ENCODE measurements at regions of chr2 and their contacts with region 1.

Region 1: GRCh38 chr2:60596411-60596810 is 43.0 kb upstream of the BCL11A start:
- DNase-seq: no peak
- H3K4me3 Mint-ChIP-seq: no peak overlapping the region
- H3K27ac Mint-ChIP-seq: no peak overlapping the region
- H3K4me1 Mint-ChIP-seq: peaks cover 8% of the 10 kb centered on the region
- H3K27me3 Mint-ChIP-seq: no peaks in the 10 kb centered on the region
- CTCF ChIP-seq: no peak

Region 2: DNA sequence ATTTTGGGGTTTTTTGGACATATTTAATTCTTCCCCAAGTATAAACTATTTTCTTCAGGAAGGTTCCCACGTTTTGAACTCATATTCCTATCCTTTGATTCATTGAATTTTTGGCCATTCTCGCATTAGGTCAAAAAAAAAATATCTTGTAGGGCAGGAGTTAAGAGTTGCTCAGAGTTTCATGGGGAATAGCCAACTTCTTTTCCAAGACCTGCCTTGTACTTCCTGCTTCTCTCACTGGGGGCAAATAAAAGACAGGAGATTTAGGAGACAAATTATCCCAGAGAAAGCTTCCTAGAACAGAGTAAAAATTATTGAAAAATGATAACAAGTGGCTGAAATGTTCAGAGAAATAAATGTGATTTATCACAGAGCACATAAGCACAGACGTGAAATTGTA is 12.3 kb after region 1 on chr2:
- CTCF ChIA-PET with region 1: interaction called, 10 read pairs
- POLR2A ChIA-PET with region 1: no interaction called
- intact Hi-C with region 1: no loop called
- DNase-seq: no peak
- H3K4me3 Mint-ChIP-seq: no peak overlapping the region
- H3K27ac Mint-ChIP-seq: no peak overlapping the region
- H3K4me1 Mint-ChIP-seq: no peaks in the 10 kb centered on the region
- H3K27me3 Mint-ChIP-seq: no peaks in the 10 kb centered on the region
- CTCF ChIP-seq: no peak

Region 3: DNA sequence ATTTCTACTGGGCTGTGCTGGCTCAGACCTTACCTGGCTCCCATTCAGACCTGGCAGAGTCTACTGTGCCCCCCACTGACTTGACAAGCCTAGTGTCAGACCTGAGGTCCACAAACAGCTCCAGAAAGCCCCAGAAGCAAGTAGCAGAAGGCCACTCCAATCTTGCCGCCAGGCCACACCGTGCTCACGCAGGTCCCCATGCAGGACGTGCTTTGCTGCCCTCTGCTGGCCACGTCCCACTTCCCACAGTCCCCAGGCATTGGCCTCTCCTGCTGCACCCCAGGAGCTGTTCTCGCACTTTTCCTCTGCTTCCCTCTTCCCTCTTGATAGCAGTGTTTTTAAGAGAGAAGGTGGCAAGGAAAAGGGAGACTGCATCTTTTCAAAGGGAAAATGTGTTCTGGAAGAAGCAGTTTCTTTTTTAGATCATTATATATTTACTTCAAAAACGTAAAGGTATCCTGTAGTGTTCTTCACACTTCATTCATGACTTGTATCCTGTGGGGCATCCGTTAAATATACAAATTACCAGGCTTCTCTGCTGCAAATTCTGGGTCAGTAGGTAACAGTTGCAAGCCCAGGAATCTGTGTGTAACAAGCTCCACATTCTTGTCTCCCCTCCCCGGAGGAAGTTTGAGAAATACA is 78.2 kb after region 1 on chr2:
- CTCF ChIA-PET with region 1: no interaction called
- POLR2A ChIA-PET with region 1: no interaction called
- intact Hi-C with region 1: no loop called
- DNase-seq: peak; percentile 77
- H3K4me3 Mint-ChIP-seq: no peak overlapping the region
- H3K27ac Mint-ChIP-seq: no peak overlapping the region
- H3K4me1 Mint-ChIP-seq: peaks cover 11% of the 10 kb centered on the region
- H3K27me3 Mint-ChIP-seq: peaks cover 21% of the 10 kb centered on the region
- CTCF ChIP-seq: peak; percentile 83

Measured in MCF 10A (cell line).